Gastrocnemius medialis (tissue), 4 donors: ENCODE measurements at regions of chr5 and their contacts with region 1.

Region 1: GRCh38 chr5:149711338-149711737 is 18.8 kb upstream of the PPARGC1B start:
- DNase-seq: no peak
- ATAC-seq: no peak
- H3K4me3 ChIP-seq: no peak overlapping the region
- H3K27ac ChIP-seq: no peak overlapping the region
- H3K4me1 ChIP-seq: no peaks in the 10 kb centered on the region
- H3K27me3 ChIP-seq: no peaks in the 10 kb centered on the region
- CTCF ChIP-seq: no peak
- POLR2A ChIP-seq: no peak

Region 2: DNA sequence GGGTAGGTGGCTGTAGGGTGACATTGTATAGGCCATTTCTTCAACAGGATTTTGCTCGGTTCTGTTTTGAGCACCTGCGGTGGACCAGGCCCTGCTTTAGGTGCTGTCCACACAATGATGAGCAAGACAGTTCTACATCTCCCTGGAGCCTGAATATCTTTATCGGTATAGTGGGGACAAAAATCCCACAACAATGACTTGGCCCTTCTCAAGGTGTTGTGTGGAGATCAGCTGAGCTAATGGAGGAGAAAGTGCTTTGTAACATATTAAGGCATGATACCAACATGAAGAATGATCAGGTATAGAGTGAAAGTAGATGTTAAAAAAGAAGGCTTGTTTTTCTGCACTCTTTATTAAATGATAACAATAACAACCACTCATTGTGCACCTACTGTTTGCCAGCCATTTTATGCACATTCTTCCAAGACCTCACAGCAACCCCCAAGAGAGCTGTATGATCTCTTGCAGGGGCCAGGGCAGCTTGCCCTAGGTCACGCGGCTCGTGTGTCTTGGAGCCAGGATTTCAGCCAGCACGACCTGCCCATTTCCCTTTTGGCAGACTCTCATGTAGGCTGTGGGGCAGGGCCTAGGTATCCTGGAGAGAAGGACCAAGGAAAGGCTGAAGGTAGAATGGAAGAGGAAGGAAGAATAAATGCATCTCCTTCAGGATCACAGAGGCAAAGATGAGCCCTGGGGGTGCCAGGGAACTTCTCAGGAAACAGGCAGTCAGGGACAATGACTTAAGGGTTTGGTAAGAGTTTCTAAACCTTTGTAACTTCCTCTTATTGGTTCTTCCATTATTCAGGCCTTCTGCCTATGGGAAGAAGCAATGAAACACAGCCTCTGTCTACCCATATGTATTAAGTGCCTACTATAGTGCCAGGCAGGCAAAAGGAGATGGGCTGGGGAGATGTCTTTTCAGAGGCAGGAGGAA is 31.2 kb before region 1 on chr5:
- in situ Hi-C with region 1: no loop called
- intact Hi-C with region 1: loop called (anchors 5 kb)
- DNase-seq: peak in 1 of 2 donors; percentile 76
- ATAC-seq: peak; percentile 37 to 85
- H3K4me3 ChIP-seq: no peak overlapping the region
- H3K27ac ChIP-seq: peak overlapping the region in 3 of 4 donors; percentile 35 to 70 (median 38)
- H3K4me1 ChIP-seq: peaks cover 14 to 30% of the 10 kb centered on the region in 2 donors
- H3K27me3 ChIP-seq: no peaks in the 10 kb centered on the region
- CTCF ChIP-seq: no peak
- POLR2A ChIP-seq: no peak